ENCODE measurements at regions of chr12 and their contacts with region 1.

Region 1: DNA sequence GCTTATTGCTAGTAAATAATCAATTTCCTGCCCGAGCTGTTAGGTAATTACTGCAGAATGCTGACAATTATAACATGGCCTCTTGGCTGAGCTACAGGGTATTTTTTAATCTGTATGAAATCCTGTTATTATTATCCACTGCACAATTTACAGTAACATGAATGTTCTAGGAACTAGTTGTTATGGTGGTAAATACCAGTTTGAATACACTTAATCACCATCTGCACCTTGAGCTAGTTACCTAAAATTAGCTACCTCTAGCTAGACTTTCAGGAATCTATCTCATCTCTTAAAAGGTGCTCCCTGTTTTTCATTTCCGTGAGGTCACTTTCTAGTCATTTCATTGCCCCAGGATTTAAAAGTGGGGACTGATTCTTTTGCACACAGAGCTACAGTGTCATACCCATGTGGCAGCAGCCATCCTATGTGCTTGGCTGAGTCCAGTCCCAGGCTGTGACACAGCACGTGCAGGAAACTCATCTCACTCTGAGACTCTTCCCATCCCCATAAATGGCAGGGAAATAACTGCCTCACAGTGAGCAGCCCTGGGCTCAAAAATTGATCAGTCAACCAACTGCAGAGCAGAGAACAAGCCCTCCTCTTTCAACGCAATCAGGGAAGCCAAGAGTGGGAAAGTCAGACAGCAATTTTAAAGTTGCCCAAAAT is 37.6 kb downstream of the DCP1B start:
- DNase-seq: no peak
- H3K4me3 ChIP-seq: no peak overlapping the region
- H3K27ac ChIP-seq: no peak overlapping the region
- H3K27me3 ChIP-seq: no peaks in the 10 kb centered on the region
- CTCF ChIP-seq: no peak

Region 2: DNA sequence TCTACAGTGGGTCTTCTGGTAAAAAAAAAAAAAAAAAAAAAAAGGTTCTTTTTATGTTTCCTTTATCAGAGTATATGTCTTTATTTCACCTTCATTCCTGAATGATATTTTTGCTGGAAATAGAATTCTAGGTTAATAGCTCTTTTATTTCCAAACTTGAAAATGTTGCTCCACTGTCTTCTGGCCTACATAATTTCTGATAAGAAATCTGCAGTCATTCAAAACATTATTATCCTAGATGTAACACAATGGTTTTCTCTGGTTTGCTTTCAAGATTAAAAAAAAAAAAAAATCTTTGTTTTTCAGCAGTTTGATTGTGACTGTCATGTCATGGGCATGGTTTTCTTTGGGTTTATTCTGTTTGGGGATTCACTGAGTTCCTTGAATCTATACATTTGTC is 18.1 kb after region 1 on chr12:
- CTCF ChIA-PET with region 1: interaction called, 12 read pairs
- POLR2A ChIA-PET with region 1: no interaction called
- DNase-seq: no peak
- H3K4me3 ChIP-seq: no peak overlapping the region
- H3K27ac ChIP-seq: no peak overlapping the region
- H3K27me3 ChIP-seq: no peaks in the 10 kb centered on the region
- CTCF ChIP-seq: no peak